Activated naive CD4-positive, alpha-beta T cell treated with anti-CD3 and anti-CD28 coated beads for 36 hours (primary cell): ENCODE measurements at regions of chr22 and their contacts with region 1.

Region 1: DNA sequence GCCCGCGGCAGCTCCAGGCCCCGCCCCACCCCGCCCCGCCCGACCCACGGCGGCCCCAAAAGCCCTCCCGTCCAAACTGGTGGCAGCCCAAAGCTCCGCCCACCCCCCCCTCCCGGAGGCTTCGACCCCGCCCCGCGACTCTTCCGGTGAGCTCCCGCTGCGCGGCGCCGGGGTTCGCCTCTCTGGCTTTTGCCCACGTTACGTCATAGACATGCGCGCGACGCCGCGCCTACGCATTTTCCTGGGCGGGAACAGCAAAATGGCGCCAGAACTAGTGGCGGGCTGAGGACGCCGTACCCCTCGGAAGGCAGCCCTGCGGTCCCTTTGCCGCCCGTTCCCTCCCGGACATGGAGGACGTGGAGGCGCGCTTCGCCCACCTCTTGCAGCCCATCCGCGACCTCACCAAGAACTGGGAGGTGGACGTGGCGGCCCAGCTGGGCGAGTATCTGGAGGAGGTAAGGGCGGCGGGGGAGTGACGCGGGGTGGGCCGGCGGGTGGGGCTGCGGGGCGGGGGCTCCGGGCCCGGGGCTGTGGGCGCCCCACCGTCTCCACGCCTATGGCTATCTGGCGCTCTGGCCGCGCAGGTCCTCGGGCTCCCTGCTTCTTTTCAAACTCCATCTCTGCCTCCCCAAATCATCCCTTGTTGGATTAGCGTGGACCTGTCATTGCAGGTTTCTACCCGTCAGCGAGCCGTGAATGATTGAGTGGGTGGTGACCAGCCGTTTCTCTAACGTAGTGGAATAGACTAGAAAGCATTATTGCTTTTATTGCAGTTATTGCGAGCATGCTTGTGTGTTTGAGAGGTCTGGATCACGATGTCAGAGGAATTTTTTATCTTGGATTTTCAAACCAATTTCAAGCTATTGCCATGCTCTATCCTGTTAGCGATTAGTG is at the start of gene NCAPH2:
- DNase-seq: peak; percentile 98
- H3K4me3 Mint-ChIP-seq: peak within 1 kb of the TSS; percentile 96
- H3K27ac Mint-ChIP-seq: peak within 1 kb of the TSS; percentile 96
- H3K4me1 Mint-ChIP-seq: peaks cover 30% of the 10 kb centered on the region
- H3K27me3 Mint-ChIP-seq: no peaks in the 10 kb centered on the region
- total RNA-seq, gene NCAPH2: 104 to 115 TPM

Region 2: GRCh38 chr22:50341977-50342650 is 166.1 kb before region 1 on chr22:
- CTCF ChIA-PET with region 1: no interaction called
- intact Hi-C with region 1: loop called (anchors 2 kb)
- DNase-seq: peak; percentile 94
- H3K4me3 Mint-ChIP-seq: peak overlapping the region; percentile 71
- H3K27ac Mint-ChIP-seq: peak overlapping the region; percentile 82
- H3K4me1 Mint-ChIP-seq: peaks cover 8% of the 10 kb centered on the region
- H3K27me3 Mint-ChIP-seq: no peaks in the 10 kb centered on the region

Region 3: DNA sequence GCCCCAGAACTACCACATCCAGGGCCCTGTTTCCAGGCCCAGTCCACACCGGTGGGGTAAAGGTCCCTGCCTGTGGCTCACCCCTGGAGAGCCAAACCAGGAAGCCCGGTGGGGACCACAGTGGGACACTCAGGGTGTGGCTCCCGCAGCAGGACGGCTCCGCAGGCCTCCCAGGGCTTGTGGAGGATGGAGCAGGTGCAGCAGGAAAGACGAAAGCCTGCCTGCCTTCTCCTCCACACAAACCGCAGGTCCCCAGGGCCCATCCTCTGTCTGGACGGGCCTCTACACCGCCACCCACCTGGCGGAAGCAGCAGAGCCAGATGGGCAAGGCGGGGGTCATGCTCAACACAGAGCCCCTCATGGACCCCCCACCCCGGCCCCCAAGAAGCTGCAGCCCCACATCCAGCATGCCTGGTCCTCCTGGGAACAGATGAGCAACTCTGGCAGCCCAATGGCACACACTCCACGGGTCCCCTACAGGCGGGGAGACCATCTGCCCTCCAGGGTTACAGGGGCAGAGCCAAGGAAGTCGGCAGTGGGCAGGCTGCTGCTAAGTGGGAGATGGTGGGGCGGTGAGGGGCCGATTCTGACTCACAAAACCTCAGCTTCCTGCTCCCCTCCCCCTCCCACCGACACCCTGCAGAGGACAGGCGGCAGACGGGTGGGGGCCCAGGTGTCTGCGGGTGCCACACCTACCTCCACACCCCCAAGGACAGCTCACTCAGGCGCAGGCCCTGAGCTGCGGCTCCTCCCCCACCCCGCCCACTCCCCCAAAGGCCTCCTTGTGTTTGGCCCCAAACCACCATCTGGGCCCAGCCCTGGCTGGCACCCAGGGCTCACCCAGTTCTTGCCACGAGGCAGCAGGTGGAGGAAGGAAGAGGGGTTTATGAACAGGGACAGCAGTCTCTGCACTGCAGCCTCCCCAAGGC is 38.6 kb before region 1 on chr22:
- CTCF ChIA-PET with region 1: no interaction called
- intact Hi-C with region 1: loop called (anchors 1 kb)
- DNase-seq: peak; percentile 97
- H3K4me3 Mint-ChIP-seq: peak overlapping the region; percentile 56
- H3K27ac Mint-ChIP-seq: peak overlapping the region; percentile 89
- H3K4me1 Mint-ChIP-seq: peaks cover 58% of the 10 kb centered on the region
- H3K27me3 Mint-ChIP-seq: no peaks in the 10 kb centered on the region

Region 4: GRCh38 chr22:50474668-50475492 is 33.4 kb before region 1 on chr22 and contains the start of gene SBF1:
- CTCF ChIA-PET with region 1: no interaction called
- intact Hi-C with region 1: loop called (anchors 2 kb)
- DNase-seq: peak; percentile 90
- H3K4me3 Mint-ChIP-seq: peak within 1 kb of the TSS; percentile 95
- H3K27ac Mint-ChIP-seq: peak within 1 kb of the TSS; percentile 87
- H3K4me1 Mint-ChIP-seq: peaks cover 46% of the 10 kb centered on the region
- H3K27me3 Mint-ChIP-seq: peaks cover 3% of the 10 kb centered on the region
- total RNA-seq, gene SBF1: 100 TPM

Region 5: GRCh38 chr22:50544078-50544745 is 36.0 kb after region 1 on chr22:
- CTCF ChIA-PET with region 1: interaction called, 3 read pairs
- intact Hi-C with region 1: loop called (anchors 1 kb)
- DNase-seq: peak; percentile 92
- H3K4me3 Mint-ChIP-seq: peak overlapping the region; percentile 62
- H3K27ac Mint-ChIP-seq: peak overlapping the region; percentile 72
- H3K4me1 Mint-ChIP-seq: peaks cover 60% of the 10 kb centered on the region
- H3K27me3 Mint-ChIP-seq: no peaks in the 10 kb centered on the region

Region 6: DNA sequence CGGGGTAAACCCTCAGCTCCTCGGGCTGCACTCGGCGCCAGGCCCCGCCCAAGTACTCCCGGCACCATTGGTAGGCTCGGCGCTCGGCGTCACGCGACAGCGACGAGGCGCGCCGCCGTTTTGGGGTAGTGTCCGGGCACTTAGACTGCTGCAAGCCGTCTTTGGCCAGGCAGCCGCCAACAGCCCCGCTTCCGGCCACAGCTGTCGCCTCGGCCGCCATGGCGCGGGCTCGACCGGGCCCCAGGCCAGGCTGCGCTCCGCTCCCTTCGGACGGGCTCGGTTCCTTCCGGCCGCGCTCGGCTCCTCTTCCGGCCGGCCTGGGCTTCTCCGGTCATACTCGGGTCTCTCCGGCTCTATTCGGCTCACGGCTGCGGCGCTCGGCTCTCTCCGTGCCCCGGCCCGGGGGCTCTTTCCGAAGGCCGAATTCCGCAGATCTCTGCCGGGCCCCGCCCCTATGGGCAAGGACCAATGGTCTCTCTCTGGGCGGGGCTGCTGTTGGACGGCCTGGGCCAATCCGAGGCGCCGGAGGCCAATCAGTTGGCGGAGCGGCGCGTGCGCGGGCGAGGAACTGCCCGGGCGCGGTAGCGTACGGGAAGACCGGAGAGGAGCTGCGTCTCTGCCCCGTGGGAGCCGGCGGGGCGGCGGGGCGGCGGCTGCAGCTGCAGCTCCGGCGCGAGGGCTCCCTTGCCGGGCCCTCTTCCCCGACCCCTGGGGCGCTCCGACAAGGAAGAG is 74.5 kb after region 1 on chr22 and contains the start of gene CHKB:
- CTCF ChIA-PET with region 1: interaction called, 3 read pairs
- intact Hi-C with region 1: loop called (anchors 1 kb)
- DNase-seq: peak; percentile 99
- H3K4me3 Mint-ChIP-seq: peak within 1 kb of the TSS; percentile 91
- H3K27ac Mint-ChIP-seq: peak within 1 kb of the TSS; percentile 82
- H3K4me1 Mint-ChIP-seq: peaks cover 31% of the 10 kb centered on the region
- H3K27me3 Mint-ChIP-seq: no peaks in the 10 kb centered on the region
- total RNA-seq, gene CHKB: 71.0 to 81.4 TPM

Region 7: DNA sequence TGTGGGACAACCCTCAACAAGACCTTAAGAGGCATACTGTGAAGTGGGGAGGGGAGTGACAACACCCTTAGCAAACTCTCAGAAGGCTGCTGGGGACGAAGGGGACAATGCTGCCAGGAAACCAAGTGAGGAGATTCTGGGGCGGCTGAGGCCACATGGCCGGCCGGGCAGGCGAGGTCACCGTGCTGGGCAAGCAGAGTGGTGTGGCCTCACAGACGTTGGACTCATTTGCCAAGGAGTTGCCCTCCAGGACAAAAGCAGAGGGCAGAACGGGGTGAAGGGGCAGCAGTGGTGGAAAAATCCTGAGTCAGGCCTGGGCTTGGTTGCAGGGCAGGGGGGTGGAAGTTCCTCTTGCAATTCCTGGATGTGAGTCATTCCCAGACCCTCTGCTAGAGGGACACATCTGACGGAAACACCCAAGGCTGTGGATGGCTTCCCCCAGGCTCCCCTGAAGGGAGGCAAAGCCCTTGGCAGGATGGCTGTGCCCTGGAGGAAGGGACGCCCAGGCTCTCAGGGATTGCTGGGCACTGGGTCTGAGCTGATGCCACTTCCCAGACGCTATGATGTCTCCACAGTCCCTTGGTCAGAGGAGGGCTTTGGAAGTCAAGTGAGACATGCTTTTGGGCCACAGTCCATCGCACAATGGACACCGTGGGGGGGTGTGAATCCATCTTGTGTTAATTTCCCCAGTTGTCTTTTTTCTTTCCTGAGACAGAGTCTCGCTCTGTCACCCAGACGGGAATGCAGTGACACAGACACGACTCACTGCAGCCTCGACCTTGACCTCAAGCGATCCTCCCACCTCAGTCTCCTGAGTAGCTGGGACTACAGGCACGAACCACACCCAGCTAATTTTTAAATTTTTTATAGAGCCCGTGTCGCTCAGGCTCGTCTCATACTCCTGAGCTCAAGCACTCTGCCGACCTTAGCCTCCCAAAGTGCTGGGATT is 148.2 kb after region 1 on chr22:
- CTCF ChIA-PET with region 1: no interaction called
- intact Hi-C with region 1: no loop called
- DNase-seq: no peak
- H3K4me3 Mint-ChIP-seq: no peak overlapping the region
- H3K27ac Mint-ChIP-seq: no peak overlapping the region
- H3K4me1 Mint-ChIP-seq: no peaks in the 10 kb centered on the region
- H3K27me3 Mint-ChIP-seq: peaks cover 8% of the 10 kb centered on the region